MCF 10A (cell line): ENCODE measurements at regions of chr9 and their contacts with region 1.

Region 1: DNA sequence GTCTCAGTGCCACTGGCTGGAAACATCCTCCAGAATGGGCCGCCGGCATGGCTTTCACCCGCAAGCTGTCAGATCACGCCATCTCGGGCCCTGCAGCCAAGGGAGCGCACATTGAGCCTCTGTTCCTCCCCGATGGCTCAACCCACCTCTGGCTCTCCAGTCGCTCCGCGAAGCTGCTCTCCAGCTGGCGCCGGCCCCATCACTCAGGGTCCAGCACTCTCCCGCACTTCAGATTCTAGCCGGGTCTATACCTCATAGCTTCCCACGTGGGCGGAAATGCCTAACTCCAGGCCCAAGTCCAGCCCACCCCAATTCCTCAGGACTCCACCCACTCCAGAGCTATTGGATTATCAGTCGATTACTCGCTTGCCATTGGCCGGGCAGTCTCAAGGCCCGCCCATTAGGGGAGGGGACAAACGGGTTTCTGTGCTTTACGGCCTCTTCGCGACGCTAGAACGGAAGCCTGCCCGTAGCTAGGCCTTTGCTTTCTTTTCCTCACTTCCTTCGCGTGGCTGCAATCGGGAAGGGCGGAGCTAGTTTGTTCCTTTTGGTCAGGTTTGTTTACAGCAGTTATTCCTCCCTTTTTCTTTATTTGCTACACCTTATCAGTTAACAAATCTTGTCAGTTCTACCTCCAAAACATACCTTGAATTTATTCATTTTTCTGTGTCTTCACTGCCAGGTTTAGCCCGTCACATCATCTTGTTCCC is at the start of gene NOL6:
- DNase-seq: peak; percentile 100
- H3K4me3 Mint-ChIP-seq: peak within 1 kb of the TSS; percentile 97
- H3K27ac Mint-ChIP-seq: peak within 1 kb of the TSS; percentile 89
- H3K4me1 Mint-ChIP-seq: peaks cover 10% of the 10 kb centered on the region
- H3K27me3 Mint-ChIP-seq: no peaks in the 10 kb centered on the region
- CTCF ChIP-seq: no peak
- total RNA-seq, gene NOL6: 37.2 and 48.6 TPM in 2 replicates

Region 2: GRCh38 chr9:32992595-32993238 is 481.1 kb before region 1 on chr9:
- CTCF ChIA-PET with region 1: no interaction called
- POLR2A ChIA-PET with region 1: no interaction called
- intact Hi-C with region 1: no loop called
- DNase-seq: no peak
- H3K4me3 Mint-ChIP-seq: no peak overlapping the region
- H3K27ac Mint-ChIP-seq: no peak overlapping the region
- H3K4me1 Mint-ChIP-seq: peaks cover 9% of the 10 kb centered on the region
- H3K27me3 Mint-ChIP-seq: no peaks in the 10 kb centered on the region
- CTCF ChIP-seq: no peak

Region 3: GRCh38 chr9:33393581-33393980 is 80.2 kb before region 1 on chr9:
- CTCF ChIA-PET with region 1: no interaction called
- POLR2A ChIA-PET with region 1: interaction called, 18 read pairs
- intact Hi-C with region 1: no loop called
- DNase-seq: no peak
- H3K4me3 Mint-ChIP-seq: no peak overlapping the region
- H3K27ac Mint-ChIP-seq: peak overlapping the region; percentile 6
- H3K4me1 Mint-ChIP-seq: peaks cover 27% of the 10 kb centered on the region
- H3K27me3 Mint-ChIP-seq: peaks cover 19% of the 10 kb centered on the region
- CTCF ChIP-seq: no peak

Region 4: GRCh38 chr9:33498387-33498786 is 24.6 kb after region 1 on chr9:
- CTCF ChIA-PET with region 1: interaction called, 4 read pairs
- POLR2A ChIA-PET with region 1: interaction called, 13 read pairs
- intact Hi-C with region 1: no loop called
- DNase-seq: no peak
- H3K4me3 Mint-ChIP-seq: no peak overlapping the region
- H3K27ac Mint-ChIP-seq: no peak overlapping the region
- H3K4me1 Mint-ChIP-seq: no peaks in the 10 kb centered on the region
- H3K27me3 Mint-ChIP-seq: no peaks in the 10 kb centered on the region
- CTCF ChIP-seq: peak; percentile 12

Region 5: GRCh38 chr9:33517373-33517772 is 43.6 kb after region 1 on chr9:
- CTCF ChIA-PET with region 1: interaction called, 5 read pairs
- POLR2A ChIA-PET with region 1: interaction called, 21 read pairs
- intact Hi-C with region 1: loop called (anchors 2 kb)
- DNase-seq: peak; percentile 68
- H3K4me3 Mint-ChIP-seq: no peak overlapping the region
- H3K27ac Mint-ChIP-seq: no peak overlapping the region
- H3K4me1 Mint-ChIP-seq: peaks cover 5% of the 10 kb centered on the region
- H3K27me3 Mint-ChIP-seq: no peaks in the 10 kb centered on the region
- CTCF ChIP-seq: peak; percentile 53

Region 6: DNA sequence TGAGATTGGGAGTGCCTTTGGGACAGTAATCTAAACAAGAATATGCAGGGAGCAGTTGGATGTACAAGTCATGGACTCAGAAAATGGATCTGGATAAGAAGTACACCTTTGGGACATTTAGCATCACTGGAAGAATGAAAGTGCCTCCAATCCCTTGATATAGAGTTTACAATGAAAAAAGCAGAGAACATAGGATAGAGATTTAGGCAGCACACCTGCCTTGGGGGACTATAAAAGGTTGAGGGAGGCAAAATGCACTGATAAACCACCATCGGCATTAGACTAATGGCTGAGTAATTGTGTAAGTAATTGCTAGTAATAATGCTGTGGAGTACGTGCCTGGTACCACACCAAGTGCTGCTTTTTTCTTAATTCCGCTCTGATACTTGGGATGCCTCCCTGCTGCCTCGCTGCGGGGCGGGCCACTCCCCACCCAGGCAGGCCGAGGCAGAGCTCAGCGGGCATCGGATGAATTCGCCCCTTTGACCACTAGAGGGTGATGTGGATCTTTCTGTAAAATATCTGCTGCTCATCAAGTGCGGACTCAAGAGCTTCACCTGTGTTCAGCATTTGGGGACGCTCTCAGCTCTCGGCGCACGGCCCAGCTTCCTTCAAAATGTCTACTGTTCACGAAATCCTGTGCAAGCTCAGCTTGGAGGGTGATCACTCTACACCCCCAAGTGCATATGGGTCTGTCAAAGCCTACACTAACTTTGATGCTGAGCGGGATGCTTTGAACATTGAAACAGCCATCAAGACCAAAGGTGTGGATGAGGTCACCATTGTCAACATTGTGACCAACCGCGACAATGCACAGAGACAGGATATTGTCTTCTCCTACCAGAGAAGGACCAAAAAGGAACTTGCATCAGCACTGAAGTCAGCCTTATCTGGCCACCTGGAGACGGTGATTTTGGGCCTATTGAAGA is 150.1 kb after region 1 on chr9:
- CTCF ChIA-PET with region 1: interaction called, 6 read pairs
- POLR2A ChIA-PET with region 1: interaction called, 13 read pairs
- intact Hi-C with region 1: no loop called
- DNase-seq: peak; percentile 85
- H3K4me3 Mint-ChIP-seq: no peak overlapping the region
- H3K27ac Mint-ChIP-seq: no peak overlapping the region
- H3K4me1 Mint-ChIP-seq: peaks cover 31% of the 10 kb centered on the region
- H3K27me3 Mint-ChIP-seq: no peaks in the 10 kb centered on the region
- CTCF ChIP-seq: peak; percentile 78

Region 7: DNA sequence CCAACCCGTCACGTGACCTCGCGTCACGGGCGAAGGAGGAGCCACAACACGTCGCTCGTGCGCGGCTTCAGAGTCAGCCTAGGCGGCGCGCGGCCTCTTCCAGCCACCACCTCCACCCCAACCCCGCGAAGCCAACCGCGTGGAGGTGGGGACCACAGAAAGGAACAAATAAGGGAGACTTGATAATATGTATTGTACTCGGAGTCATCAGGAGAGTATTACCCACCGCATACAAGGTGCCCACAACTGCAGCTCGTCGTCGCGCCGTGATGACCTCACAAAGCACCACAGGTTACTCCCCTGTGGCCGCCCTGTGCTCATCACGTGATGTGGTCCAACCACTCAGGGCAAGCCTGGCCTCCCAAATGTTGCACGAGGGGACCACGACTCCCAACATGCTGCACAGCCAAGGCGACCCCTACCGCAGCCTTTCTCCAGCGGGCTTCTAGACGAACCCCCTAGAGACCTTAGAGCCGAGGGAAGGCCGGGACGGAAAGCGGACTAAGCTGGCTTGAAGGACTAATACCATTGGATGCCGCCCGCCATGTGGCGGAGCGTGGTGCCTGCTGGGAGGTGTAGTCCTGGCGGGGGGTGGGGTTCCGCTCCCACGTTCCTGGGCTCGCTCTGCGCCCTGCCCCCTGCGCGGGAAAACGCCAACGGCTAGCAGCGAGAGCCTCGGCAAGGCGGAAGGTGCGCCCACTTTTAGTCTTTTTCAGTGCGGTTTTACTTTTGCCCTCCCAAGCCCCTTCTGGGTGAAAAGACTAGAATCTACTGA is 575.3 kb after region 1 on chr9:
- CTCF ChIA-PET with region 1: no interaction called
- POLR2A ChIA-PET with region 1: no interaction called
- intact Hi-C with region 1: no loop called
- DNase-seq: peak; percentile 98
- H3K4me3 Mint-ChIP-seq: peak overlapping the region; percentile 89
- H3K27ac Mint-ChIP-seq: peak overlapping the region; percentile 99
- H3K4me1 Mint-ChIP-seq: peaks cover 20% of the 10 kb centered on the region
- H3K27me3 Mint-ChIP-seq: no peaks in the 10 kb centered on the region
- CTCF ChIP-seq: no peak